A549 (cell line): ENCODE measurements at regions of chr10 and their contacts with region 1.

Region 1: DNA sequence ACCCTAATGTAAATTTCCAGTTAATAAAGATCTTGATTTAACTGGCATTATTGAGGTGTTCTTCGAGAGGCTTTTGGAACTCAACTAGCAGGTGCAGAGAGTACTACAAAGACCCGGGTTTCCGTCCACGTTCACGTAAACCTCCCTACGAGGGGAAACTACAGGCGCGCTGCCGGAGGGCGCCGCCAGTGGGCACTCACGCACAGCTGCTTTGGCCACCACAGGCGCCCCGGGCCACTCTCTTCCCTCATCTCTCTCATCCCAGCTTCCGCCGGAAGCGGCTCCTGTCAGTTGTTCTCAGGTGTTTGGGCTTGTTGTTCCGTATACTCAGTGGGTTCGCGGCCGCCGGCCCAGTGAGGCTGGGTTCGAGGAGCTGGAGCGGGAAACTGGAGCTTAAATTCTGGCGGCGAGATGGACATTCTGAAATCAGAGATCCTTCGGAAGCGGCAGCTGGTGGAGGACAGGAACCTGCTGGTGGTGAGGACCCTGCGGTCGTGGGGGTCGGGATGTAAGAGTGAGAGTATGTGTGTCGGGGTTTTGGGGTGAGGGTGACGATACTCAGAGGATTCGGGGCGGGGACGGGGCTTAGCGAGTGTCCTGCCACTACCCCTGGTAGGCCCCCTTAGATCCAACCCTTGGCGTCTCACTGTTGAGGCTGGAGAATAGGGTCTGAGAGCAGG is at the start of gene PRPF18:
- DNase-seq: peak; percentile 96 to 98
- ATAC-seq: peak; percentile 99
- H3K4me3 ChIP-seq: peak within 1 kb of the TSS; percentile 99
- H3K27ac ChIP-seq: peak within 1 kb of the TSS; percentile 75 to 88
- H3K4me1 ChIP-seq: peaks cover 6% of the 10 kb centered on the region; the same call in 1 of the 3 replicates
- CTCF ChIP-seq: peak; percentile 87
- EP300 ChIP-seq: no peak
- POLR2A ChIP-seq: peak; percentile 63
- RAD21 ChIP-seq: peak; percentile 32 to 56; a peak in 4 of 5 replicates
- polyA plus RNA-seq, gene PRPF18: 21.5 and 39.6 TPM in 2 replicates

Region 2: GRCh38 chr10:13317474-13317873 is 269.3 kb before region 1 on chr10:
- CTCF ChIA-PET with region 1: no interaction called
- POLR2A ChIA-PET with region 1: no interaction called
- DNase-seq: no peak
- ATAC-seq: no peak
- H3K4me3 ChIP-seq: no peak overlapping the region
- H3K27ac ChIP-seq: no peak overlapping the region
- H3K4me1 ChIP-seq: no peaks in the 10 kb centered on the region
- CTCF ChIP-seq: no peak
- EP300 ChIP-seq: no peak
- POLR2A ChIP-seq: no peak
- RAD21 ChIP-seq: no peak

Region 3: GRCh38 chr10:13414894-13415293 is 171.9 kb before region 1 on chr10:
- CTCF ChIA-PET with region 1: no interaction called
- POLR2A ChIA-PET with region 1: no interaction called
- DNase-seq: peak in 1 of 2 experiments; percentile 42
- ATAC-seq: peak in 1 of 2 experiments; percentile 69; a peak in 3 of 6 replicates
- H3K4me3 ChIP-seq: no peak overlapping the region
- H3K27ac ChIP-seq: no peak overlapping the region
- H3K4me1 ChIP-seq: no peaks in the 10 kb centered on the region
- CTCF ChIP-seq: no peak
- EP300 ChIP-seq: no peak
- POLR2A ChIP-seq: no peak
- RAD21 ChIP-seq: 0 out of 5 replicates have a peak, but pooled peaks of 1 of the 2 experiments have one; percentile 21

Region 4: GRCh38 chr10:13573960-13574359 is 12.9 kb before region 1 on chr10:
- CTCF ChIA-PET with region 1: interaction called, 16 read pairs
- POLR2A ChIA-PET with region 1: no interaction called
- DNase-seq: no peak
- ATAC-seq: no peak
- H3K4me3 ChIP-seq: no peak overlapping the region
- H3K27ac ChIP-seq: no peak overlapping the region
- H3K4me1 ChIP-seq: no peaks in the 10 kb centered on the region
- CTCF ChIP-seq: no peak
- EP300 ChIP-seq: no peak
- POLR2A ChIP-seq: no peak
- RAD21 ChIP-seq: no peak